ENCODE measurements at regions of chr14 and their contacts with region 1.

Region 1: GRCh38 chr14:60091550-60092530 is at the start of gene PCNX4:
- DNase-seq: peak; percentile 94
- ATAC-seq: peak; percentile 92
- H3K4me3 ChIP-seq: peak within 1 kb of the TSS; percentile 84 to 95 (median 90)
- H3K27ac ChIP-seq: peak within 1 kb of the TSS; percentile 98
- H3K4me1 ChIP-seq: peaks cover 33% of the 10 kb centered on the region
- H3K27me3 ChIP-seq: peaks cover 0 to 3% of the 10 kb centered on the region in 2 experiments; a peak in 1 of 5 replicates
- CTCF ChIP-seq: peak; percentile 39
- EP300 ChIP-seq: 0 out of 4 replicates have a peak, but pooled peaks of 1 of the 2 experiments have one; percentile 12
- POLR2A ChIP-seq: peak; percentile 93 to 96
- RAD21 ChIP-seq: peak; percentile 11; the same call in 1 of the 2 replicates
- total RNA-seq, gene PCNX4: 30.0 and 43.0 TPM in 2 replicates

Region 2: DNA sequence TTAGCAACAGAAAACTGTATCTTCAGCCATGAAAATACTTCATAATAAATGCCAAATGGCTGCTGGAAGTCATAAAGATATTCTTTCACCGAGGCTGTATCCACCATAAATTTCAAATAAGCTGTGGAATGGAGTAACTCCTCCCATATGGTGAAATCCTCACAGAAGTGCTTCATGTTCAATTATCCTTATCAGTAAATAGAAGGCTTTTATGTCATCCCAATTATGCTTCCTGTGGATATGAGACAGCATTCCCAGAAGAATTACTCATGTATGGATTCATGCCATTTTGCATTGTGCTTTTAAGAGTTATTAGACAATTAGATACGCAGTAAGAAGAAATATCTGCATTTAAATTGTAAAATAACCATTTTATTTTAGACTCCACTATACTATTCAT is 320.3 kb before region 1 on chr14:
- CTCF ChIA-PET with region 1: no interaction called
- POLR2A ChIA-PET with region 1: no interaction called
- in situ Hi-C with region 1: no loop called
- intact Hi-C with region 1: no loop called
- DNase-seq: no peak
- ATAC-seq: no peak
- H3K4me3 ChIP-seq: no peak overlapping the region
- H3K27ac ChIP-seq: no peak overlapping the region
- H3K4me1 ChIP-seq: peaks cover 4% of the 10 kb centered on the region
- H3K27me3 ChIP-seq: no peaks in the 10 kb centered on the region
- CTCF ChIP-seq: no peak
- EP300 ChIP-seq: no peak
- POLR2A ChIP-seq: no peak
- RAD21 ChIP-seq: no peak

Region 3: GRCh38 chr14:60035177-60035576 is 56.7 kb before region 1 on chr14:
- CTCF ChIA-PET with region 1: no interaction called
- POLR2A ChIA-PET with region 1: no interaction called
- in situ Hi-C with region 1: no loop called
- intact Hi-C with region 1: no loop called
- DNase-seq: no peak
- ATAC-seq: no peak
- H3K4me3 ChIP-seq: no peak overlapping the region
- H3K27ac ChIP-seq: no peak overlapping the region
- H3K4me1 ChIP-seq: no peaks in the 10 kb centered on the region
- H3K27me3 ChIP-seq: no peaks in the 10 kb centered on the region
- CTCF ChIP-seq: no peak
- EP300 ChIP-seq: no peak
- POLR2A ChIP-seq: no peak
- RAD21 ChIP-seq: no peak

Region 4: GRCh38 chr14:60079724-60080123 is 12.1 kb before region 1 on chr14:
- CTCF ChIA-PET with region 1: no interaction called
- POLR2A ChIA-PET with region 1: no interaction called
- in situ Hi-C with region 1: no loop called
- intact Hi-C with region 1: no loop called
- DNase-seq: no peak
- ATAC-seq: no peak
- H3K4me3 ChIP-seq: no peak overlapping the region
- H3K27ac ChIP-seq: no peak overlapping the region
- H3K4me1 ChIP-seq: no peaks in the 10 kb centered on the region
- H3K27me3 ChIP-seq: no peaks in the 10 kb centered on the region
- CTCF ChIP-seq: no peak
- EP300 ChIP-seq: no peak
- POLR2A ChIP-seq: no peak
- RAD21 ChIP-seq: no peak

Region 5: GRCh38 chr14:60248697-60249318 is 157.0 kb after region 1 on chr14 and contains the start of gene PPM1A:
- CTCF ChIA-PET with region 1: no interaction called
- POLR2A ChIA-PET with region 1: interaction called, 18 read pairs
- in situ Hi-C with region 1: loop called (anchors 5 kb)
- intact Hi-C with region 1: loop called (anchors 2 kb)
- DNase-seq: peak; percentile 84
- ATAC-seq: peak; percentile 74
- H3K4me3 ChIP-seq: peak within 1 kb of the TSS; percentile 81 to 82 (median 81)
- H3K27ac ChIP-seq: peak within 1 kb of the TSS; percentile 93
- H3K4me1 ChIP-seq: peaks cover 47% of the 10 kb centered on the region
- H3K27me3 ChIP-seq: no peaks in the 10 kb centered on the region; a peak in 1 of 5 replicates
- CTCF ChIP-seq: no peak
- EP300 ChIP-seq: no peak; a peak in 1 of 4 replicates
- POLR2A ChIP-seq: peak; percentile 91 to 94
- RAD21 ChIP-seq: no peak
- total RNA-seq, gene PPM1A: 29.8 and 37.6 TPM in 2 replicates

Measured in HepG2 (cell line).